ENCODE measurements at regions of chr12 and their contacts with region 1.

Region 1: DNA sequence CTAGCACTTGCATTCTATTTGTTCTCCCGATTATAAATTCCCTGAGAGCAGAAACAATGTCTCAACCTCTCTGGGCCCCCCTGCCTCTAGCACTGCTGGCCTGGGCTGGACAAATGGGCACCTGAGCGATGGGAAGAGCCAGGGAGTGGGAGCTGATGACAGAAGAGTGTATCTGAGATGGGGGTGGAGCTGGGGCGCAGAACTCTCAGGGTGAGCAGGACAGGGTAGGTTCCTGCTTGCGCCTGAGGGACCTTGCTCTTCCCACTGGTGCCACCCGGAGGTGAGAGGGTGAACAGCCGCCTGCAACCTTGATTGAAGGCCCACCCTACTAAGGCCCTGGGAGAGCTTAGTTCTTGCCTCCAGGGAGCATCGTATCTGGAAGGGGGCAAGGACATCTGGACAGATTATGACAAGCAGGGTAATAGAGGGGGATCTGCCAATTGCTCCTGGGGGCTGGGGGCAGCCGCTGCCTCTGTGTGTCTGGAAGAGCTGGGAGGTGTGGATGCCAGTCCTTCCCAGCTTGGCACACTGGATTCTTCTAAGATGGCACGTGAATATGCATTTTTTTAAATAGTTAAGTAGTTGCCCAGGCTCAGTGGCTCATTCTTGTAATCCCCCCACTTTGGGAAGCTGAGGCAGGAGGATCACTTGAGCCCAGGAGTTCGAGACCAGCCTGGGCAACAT is 43.0 kb upstream of the TSPAN9 start:
- DNase-seq: peak; percentile 77 to 79
- H3K4me3 ChIP-seq: no peak overlapping the region
- H3K27ac ChIP-seq: peak overlapping the region in 1 of 3 donors; percentile 77
- H3K4me1 ChIP-seq: peaks cover 14 to 34% of the 10 kb centered on the region in 2 donors
- H3K27me3 ChIP-seq: no peaks in the 10 kb centered on the region
- CTCF ChIP-seq: peak; percentile 59 to 82 (median 73)
- POLR2A ChIP-seq: no peak

Region 2: GRCh38 chr12:2959505-2960389 is 74.5 kb before region 1 on chr12:
- intact Hi-C with region 1: loop called (anchors 5 kb)
- DNase-seq: peak; percentile 66 to 68
- H3K4me3 ChIP-seq: peak overlapping the region; percentile 38 to 75 (median 54)
- H3K27ac ChIP-seq: peak overlapping the region; percentile 80 to 92 (median 88)
- H3K4me1 ChIP-seq: peaks cover 23 to 37% of the 10 kb centered on the region in 2 donors
- H3K27me3 ChIP-seq: no peaks in the 10 kb centered on the region
- CTCF ChIP-seq: no peak
- POLR2A ChIP-seq: peak; percentile 3 to 11

Region 3: GRCh38 chr12:3097186-3097804 is 63.1 kb after region 1 on chr12:
- intact Hi-C with region 1: no loop called
- DNase-seq: peak; percentile 65 to 70
- H3K4me3 ChIP-seq: no peak overlapping the region
- H3K27ac ChIP-seq: peak overlapping the region; percentile 49 to 65 (median 54)
- H3K4me1 ChIP-seq: peaks cover 9 to 35% of the 10 kb centered on the region in 2 donors
- H3K27me3 ChIP-seq: no peaks in the 10 kb centered on the region
- CTCF ChIP-seq: no peak
- POLR2A ChIP-seq: no peak

Region 4: DNA sequence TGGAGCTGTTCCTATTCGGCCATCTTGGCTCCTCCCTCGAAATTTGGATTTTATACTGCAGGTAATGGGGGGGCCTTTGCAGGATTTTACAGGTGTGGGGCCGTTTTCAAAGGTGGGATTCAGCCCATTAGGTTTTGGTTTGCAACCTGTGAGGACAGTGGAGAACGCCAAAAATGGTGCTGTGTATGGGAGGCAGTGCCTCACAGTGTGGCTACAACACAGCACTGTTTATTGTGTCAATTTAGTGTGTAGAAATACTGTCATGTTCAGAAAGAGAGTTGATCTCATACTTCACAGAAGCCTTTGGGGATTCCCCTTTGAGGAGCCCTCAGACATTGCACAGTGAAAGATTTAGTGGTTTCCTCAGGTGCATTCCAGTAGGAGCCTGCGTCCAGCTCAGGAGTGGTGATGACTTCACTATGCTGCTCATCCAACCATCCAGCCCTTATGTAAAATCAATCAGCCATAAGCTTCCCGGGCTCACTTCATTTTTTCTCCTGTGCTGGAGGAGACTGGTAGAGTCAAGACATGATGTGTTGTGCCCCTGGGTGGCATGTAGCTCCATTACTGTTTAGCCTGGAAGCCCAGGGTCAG is 364.1 kb after region 1 on chr12:
- intact Hi-C with region 1: no loop called
- DNase-seq: peak; percentile 2 to 5
- H3K4me3 ChIP-seq: no peak overlapping the region
- H3K27ac ChIP-seq: no peak overlapping the region
- H3K4me1 ChIP-seq: no peaks in the 10 kb centered on the region
- H3K27me3 ChIP-seq: no peaks in the 10 kb centered on the region
- CTCF ChIP-seq: no peak
- POLR2A ChIP-seq: no peak

Region 5: GRCh38 chr12:3662521-3662921 is 628.3 kb after region 1 on chr12:
- intact Hi-C with region 1: no loop called
- DNase-seq: no peak
- H3K4me3 ChIP-seq: no peak overlapping the region
- H3K27ac ChIP-seq: no peak overlapping the region
- H3K4me1 ChIP-seq: no peaks in the 10 kb centered on the region
- H3K27me3 ChIP-seq: no peaks in the 10 kb centered on the region
- CTCF ChIP-seq: no peak
- POLR2A ChIP-seq: no peak